ENCODE measurements at regions of chr18 and their contacts with region 1.

Region 1: DNA sequence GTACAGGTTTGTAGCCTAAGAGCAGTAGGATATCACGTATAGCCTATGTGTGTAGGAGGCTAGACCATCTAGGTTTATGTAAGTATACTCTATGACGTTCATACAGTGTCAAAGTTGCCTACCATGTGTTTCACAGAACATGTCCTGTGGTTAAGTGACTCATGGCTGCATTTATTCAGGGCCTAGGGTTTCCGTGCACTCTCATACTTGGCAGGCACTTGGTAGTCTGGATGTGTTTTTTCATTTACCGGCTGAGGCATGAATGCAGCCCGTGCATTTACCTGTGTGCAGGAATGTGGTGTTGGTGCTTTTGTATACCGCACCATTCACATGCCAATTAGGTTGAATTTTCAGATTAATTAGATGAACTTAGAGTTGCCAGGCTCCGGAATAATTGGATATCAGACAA is 43.4 kb downstream of the MYL12B start:
- DNase-seq: peak; percentile 98
- H3K4me3 Mint-ChIP-seq: peak overlapping the region; percentile 58
- H3K27ac Mint-ChIP-seq: peak overlapping the region; percentile 91
- H3K4me1 Mint-ChIP-seq: peaks cover 17% of the 10 kb centered on the region
- H3K27me3 Mint-ChIP-seq: no peaks in the 10 kb centered on the region
- CTCF ChIP-seq: no peak

Region 2: GRCh38 chr18:3044894-3045698 is 260.3 kb before region 1 on chr18:
- CTCF ChIA-PET with region 1: no interaction called
- POLR2A ChIA-PET with region 1: no interaction called
- intact Hi-C with region 1: no loop called
- DNase-seq: no peak
- H3K4me3 Mint-ChIP-seq: no peak overlapping the region
- H3K27ac Mint-ChIP-seq: no peak overlapping the region
- H3K4me1 Mint-ChIP-seq: peaks cover 8% of the 10 kb centered on the region
- H3K27me3 Mint-ChIP-seq: no peaks in the 10 kb centered on the region
- CTCF ChIP-seq: no peak

Region 3: GRCh38 chr18:3321133-3321812 is 15.9 kb after region 1 on chr18:
- CTCF ChIA-PET with region 1: interaction called, 8 read pairs
- POLR2A ChIA-PET with region 1: interaction called, 6 read pairs
- intact Hi-C with region 1: loop called (anchors 1 kb)
- DNase-seq: peak; percentile 99
- H3K4me3 Mint-ChIP-seq: no peak overlapping the region
- H3K27ac Mint-ChIP-seq: no peak overlapping the region
- H3K4me1 Mint-ChIP-seq: peaks cover 17% of the 10 kb centered on the region
- H3K27me3 Mint-ChIP-seq: no peaks in the 10 kb centered on the region
- CTCF ChIP-seq: no peak

Region 4: GRCh38 chr18:3350566-3351527 is 45.5 kb after region 1 on chr18:
- CTCF ChIA-PET with region 1: interaction called, 3 read pairs
- POLR2A ChIA-PET with region 1: interaction called, 14 read pairs
- intact Hi-C with region 1: no loop called
- DNase-seq: peak; percentile 73
- H3K4me3 Mint-ChIP-seq: no peak overlapping the region
- H3K27ac Mint-ChIP-seq: no peak overlapping the region
- H3K4me1 Mint-ChIP-seq: peaks cover 14% of the 10 kb centered on the region
- H3K27me3 Mint-ChIP-seq: no peaks in the 10 kb centered on the region
- CTCF ChIP-seq: no peak

Region 5: GRCh38 chr18:3368193-3368592 is 62.8 kb after region 1 on chr18:
- CTCF ChIA-PET with region 1: interaction called, 4 read pairs
- POLR2A ChIA-PET with region 1: no interaction called
- intact Hi-C with region 1: loop called (anchors 2 kb)
- DNase-seq: peak; percentile 85
- H3K4me3 Mint-ChIP-seq: peak overlapping the region; percentile 52
- H3K27ac Mint-ChIP-seq: peak overlapping the region; percentile 88
- H3K4me1 Mint-ChIP-seq: peaks cover 14% of the 10 kb centered on the region
- H3K27me3 Mint-ChIP-seq: no peaks in the 10 kb centered on the region
- CTCF ChIP-seq: no peak

Region 6: DNA sequence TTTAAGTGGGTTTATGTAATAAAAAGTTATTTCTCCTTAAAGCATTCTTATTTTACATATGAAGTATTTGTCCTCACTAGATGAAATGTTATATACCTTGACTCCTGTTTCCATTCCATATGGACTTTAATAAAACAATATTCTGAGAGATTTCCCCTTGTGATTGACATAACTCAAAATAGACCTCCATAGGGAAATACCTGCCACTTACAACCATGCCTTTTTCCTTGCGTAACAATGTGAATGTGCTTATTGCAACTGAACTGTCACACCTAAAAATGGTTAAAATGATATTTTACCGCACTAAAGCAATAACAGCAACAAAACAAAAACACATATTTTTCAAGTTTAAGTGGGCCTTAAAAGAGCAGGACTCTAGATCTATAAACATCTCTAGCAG is 74.3 kb after region 1 on chr18:
- CTCF ChIA-PET with region 1: no interaction called
- POLR2A ChIA-PET with region 1: no interaction called
- intact Hi-C with region 1: no loop called
- DNase-seq: no peak
- H3K4me3 Mint-ChIP-seq: no peak overlapping the region
- H3K27ac Mint-ChIP-seq: no peak overlapping the region
- H3K4me1 Mint-ChIP-seq: no peaks in the 10 kb centered on the region
- H3K27me3 Mint-ChIP-seq: no peaks in the 10 kb centered on the region
- CTCF ChIP-seq: no peak

Region 7: DNA sequence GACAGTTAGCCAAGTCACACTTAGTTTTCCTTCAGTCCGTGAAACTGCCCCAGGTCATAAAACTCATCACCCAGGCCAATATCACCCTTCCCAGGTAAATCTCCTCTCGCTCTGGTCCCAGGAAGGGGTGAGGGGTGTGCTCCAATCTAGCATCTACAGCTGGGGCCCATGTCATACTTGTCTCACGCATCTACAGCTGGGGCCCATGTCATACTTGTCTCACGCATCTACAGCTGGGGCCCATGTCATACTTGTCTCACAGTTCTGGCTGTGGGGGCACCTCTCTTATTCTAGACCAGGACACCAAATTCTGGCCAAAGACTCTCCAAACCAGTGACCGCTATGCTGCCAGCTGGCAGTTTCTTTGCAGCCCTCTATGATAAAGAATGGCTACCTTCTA is 1273.1 kb after region 1 on chr18:
- CTCF ChIA-PET with region 1: no interaction called
- POLR2A ChIA-PET with region 1: no interaction called
- intact Hi-C with region 1: no loop called
- DNase-seq: no peak
- H3K4me3 Mint-ChIP-seq: no peak overlapping the region
- H3K27ac Mint-ChIP-seq: no peak overlapping the region
- H3K4me1 Mint-ChIP-seq: no peaks in the 10 kb centered on the region
- H3K27me3 Mint-ChIP-seq: no peaks in the 10 kb centered on the region
- CTCF ChIP-seq: no peak

Measured in MCF 10A (cell line).